ENCODE measurements at regions of chrX and their contacts with region 1.

Region 1: GRCh38 chrX:109624641-109625616 is at the start of gene KCNE5:
- DNase-seq: peak in 2 of 5 donors; percentile 7 to 25
- ATAC-seq: peak in 2 of 4 donors; percentile 15 to 25
- H3K4me3 ChIP-seq: peak within 1 kb of the TSS in 9 of 12 donors; percentile 5 to 45 (median 36)
- H3K27ac ChIP-seq: no peak within 1 kb of the TSS
- H3K4me1 ChIP-seq: peaks cover 0 to 9% (median 0%) of the 10 kb centered on the region in 12 donors
- H3K27me3 ChIP-seq: peaks cover 0 to 15% (median 0%) of the 10 kb centered on the region in 9 donors
- CTCF ChIP-seq: no peak
- POLR2A ChIP-seq: no peak
- total RNA-seq, gene KCNE5: 0.18 to 0.61 (median 0.27) TPM in 8 of 9 donors, not detected in the other

Region 2: DNA sequence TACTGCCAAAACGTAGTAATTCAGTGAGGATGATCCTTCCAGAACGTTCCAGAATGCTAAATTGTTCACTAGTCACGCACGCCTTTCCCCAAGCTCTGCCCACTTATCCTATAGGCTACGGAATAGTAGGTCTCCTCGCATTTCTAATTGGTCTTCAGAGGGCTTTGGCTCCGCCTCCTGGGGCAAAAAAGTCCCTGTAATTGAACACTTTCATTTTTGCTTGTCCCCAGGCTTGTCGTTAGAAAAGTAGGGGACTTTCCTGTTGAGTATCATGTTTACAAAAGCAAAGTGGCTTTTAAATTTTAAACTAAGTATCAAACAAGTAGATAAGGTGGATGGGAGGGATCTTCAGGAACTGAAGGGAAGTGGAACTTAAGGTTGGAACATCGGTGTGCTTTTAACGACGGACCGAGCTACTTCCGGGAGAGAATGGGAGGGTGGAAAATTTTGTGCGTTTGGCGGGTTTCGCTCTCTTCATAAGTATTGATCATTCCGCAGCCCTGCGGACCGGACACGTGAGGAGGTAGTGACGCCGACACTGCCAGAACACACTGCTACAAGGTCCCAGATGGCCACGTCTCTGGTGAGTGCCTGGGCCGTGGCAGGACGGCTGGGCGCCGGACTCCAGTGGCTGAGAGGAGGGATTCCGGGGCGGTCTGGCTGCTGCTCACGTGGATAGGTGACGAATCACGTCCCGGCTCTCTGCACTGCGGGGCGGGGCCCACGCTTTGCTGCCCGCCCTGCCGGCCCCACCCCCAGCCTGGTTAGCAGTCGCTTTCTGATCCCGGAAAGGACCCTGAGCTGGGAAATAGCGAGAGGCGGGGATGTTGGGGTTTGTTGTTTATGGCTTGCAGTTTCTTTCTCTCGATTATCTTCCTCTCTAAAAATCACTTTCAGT is 88.2 kb before region 1 on chrX and contains the start of gene NXT2:
- intact Hi-C with region 1: loop called in 2 of 10 experiments (anchors 5 kb)
- DNase-seq: peak; percentile 91 to 94 (median 93)
- ATAC-seq: peak; percentile 100
- H3K4me3 ChIP-seq: peak within 1 kb of the TSS; percentile 40 to 88 (median 62)
- H3K27ac ChIP-seq: peak within 1 kb of the TSS; percentile 84 to 95 (median 91)
- H3K4me1 ChIP-seq: peaks cover 0 to 6% (median 0%) of the 10 kb centered on the region in 12 donors
- H3K27me3 ChIP-seq: peaks cover 0 to 2% (median 0%) of the 10 kb centered on the region in 9 donors
- CTCF ChIP-seq: no peak
- POLR2A ChIP-seq: peak in 1 of 2 donors; percentile 44
- total RNA-seq, gene NXT2: 1.3 to 5.1 (median 1.7) TPM

Measured in heart left ventricle (tissue), 16 donors.